ENCODE measurements at regions of chr3 and their contacts with region 1.

Region 1: DNA sequence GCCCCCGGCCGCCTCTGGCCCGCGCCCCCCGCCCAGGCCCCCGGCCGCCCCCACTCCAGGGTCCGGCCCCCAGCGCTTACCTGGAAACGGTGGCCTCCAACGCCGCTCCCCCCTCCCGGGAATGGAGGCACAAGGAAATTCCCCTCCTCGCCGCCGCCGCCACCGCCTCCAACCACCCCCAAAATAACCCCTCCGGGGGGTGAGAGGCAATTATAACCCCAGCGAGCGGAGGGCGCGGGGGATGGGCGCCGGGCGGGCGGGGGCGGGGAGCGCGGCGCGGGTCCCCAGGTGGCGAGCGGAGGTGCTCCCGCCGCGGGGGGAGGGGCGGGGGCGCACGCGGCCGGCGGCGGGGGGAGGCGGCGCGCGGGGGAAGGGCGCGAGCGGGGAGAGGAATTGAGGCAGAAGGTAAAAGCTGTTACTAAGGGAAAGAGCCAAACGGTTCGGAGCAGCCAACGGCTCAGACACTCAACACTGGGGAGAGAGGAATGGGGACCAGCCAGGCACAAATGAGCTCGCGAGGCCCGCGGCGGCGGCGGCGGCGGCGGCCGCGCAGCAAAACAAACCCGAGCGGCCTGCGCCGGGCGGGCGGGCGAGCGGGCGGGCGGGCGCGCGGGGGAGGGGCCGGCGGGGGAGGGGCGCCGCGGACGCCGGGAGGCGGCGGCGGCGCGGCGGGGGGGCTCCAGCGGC is at the start of gene TBL1XR1:
- DNase-seq: peak; percentile 88 to 95
- ATAC-seq: peak; percentile 52 to 84 (median 72)
- H3K4me3 ChIP-seq: peak within 1 kb of the TSS; percentile 85
- H3K4me3 Mint-ChIP-seq: peak within 1 kb of the TSS; percentile 94
- H3K27ac ChIP-seq: peak within 1 kb of the TSS; percentile 90
- H3K27ac Mint-ChIP-seq: peak within 1 kb of the TSS; percentile 93 to 97
- H3K4me1 ChIP-seq: peaks cover 21% of the 10 kb centered on the region
- H3K4me1 Mint-ChIP-seq: peaks cover 56 to 69% of the 10 kb centered on the region in 2 donors
- H3K27me3 ChIP-seq: no peaks in the 10 kb centered on the region
- H3K27me3 Mint-ChIP-seq: no peaks in the 10 kb centered on the region
- CTCF ChIP-seq: no peak
- total RNA-seq, gene TBL1XR1: 74.6 to 118 (median 81.7) TPM

Region 2: DNA sequence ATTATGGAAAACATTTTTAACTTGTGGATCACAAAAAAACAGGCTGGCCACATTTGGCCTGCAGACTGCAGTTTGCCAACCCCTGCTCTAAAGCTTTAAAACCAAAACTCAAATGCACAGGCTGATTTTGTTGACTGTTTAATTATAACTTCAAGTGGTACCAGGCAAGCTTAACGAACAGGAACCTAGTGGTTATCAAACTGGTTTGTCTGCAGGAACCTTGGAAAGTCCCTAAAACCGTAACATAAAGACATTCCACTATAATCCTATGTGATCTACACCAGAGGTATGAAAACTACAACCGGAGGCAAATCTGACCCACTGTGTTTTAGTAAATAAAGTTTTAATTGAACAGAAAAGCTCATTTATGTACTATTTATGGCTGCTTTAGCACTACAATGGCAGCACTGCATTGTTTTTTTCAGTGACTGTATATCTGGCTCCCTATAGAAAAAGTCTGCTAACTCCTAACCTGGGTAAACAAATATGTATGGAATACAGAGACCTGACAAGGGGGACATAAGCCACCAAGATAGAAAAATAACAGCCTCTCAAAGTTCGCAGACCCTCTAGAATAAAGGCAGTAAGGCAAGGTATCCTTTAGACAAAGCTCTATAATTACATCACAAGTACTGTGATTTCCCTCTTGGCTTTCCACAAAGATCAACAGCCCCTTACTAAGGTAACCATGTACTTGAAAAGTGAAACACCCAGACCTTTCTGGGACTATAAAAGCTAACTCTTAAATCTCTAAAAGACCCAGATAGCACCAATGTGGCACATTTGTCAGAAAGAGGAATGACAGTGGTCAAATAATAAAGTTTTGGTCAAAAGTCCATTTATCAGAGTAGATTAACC is 52.0 kb before region 1 on chr3:
- intact Hi-C with region 1: loop called (anchors 2 kb)
- DNase-seq: peak in 1 of 2 donors; percentile 80
- ATAC-seq: peak; percentile 87 to 88 (median 88)
- H3K4me3 ChIP-seq: no peak overlapping the region
- H3K4me3 Mint-ChIP-seq: peak overlapping the region; percentile 71
- H3K27ac ChIP-seq: peak overlapping the region; percentile 68
- H3K27ac Mint-ChIP-seq: peak overlapping the region; percentile 87 to 90
- H3K4me1 ChIP-seq: peaks cover 16% of the 10 kb centered on the region
- H3K4me1 Mint-ChIP-seq: peaks cover 56 to 59% of the 10 kb centered on the region in 2 donors
- H3K27me3 ChIP-seq: no peaks in the 10 kb centered on the region
- H3K27me3 Mint-ChIP-seq: no peaks in the 10 kb centered on the region
- CTCF ChIP-seq: no peak

Region 3: DNA sequence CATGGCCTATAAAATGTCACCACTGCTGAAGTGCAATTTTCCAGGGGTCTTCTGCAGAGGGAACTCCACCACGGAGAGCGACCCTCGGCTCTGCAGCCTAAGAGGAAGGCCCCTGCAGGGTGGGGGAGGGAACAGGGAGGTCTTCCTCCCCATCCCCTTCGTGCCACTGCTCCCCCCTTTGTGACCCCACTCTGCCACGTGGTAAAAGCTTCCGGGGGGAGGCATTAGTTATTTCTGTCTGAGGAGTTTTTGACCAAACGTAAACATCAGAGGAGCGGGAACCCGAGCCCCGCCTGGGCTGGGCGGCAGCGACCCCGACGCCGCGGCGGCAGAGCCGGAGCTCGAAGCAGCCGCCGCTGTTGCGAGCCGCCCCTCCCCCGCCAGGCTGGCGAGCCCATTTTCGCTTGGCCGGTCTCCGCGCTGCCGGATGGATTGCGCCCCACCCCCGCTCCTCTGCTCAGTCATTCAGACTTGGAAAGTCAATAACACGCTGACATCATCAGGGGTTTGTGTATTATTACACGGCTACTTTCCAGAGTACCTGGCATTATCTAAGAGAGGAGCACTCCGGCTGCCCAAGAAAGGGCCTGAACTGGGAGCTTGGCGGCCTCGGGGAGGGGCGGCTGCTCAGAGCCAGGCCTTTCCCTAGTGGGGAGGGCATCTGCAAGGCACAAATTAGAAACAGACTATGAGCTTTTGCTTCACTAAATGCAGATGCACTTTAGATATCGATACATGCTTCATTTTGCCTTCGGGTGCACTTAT is 162.6 kb after region 1 on chr3:
- intact Hi-C with region 1: loop called (anchors 1 kb)
- DNase-seq: peak; percentile 97
- ATAC-seq: peak; percentile 73 to 88 (median 74)
- H3K4me3 ChIP-seq: peak overlapping the region; percentile 60
- H3K4me3 Mint-ChIP-seq: peak overlapping the region; percentile 95
- H3K27ac ChIP-seq: peak overlapping the region; percentile 92
- H3K27ac Mint-ChIP-seq: peak overlapping the region; percentile 96 to 98
- H3K4me1 ChIP-seq: peaks cover 43% of the 10 kb centered on the region
- H3K4me1 Mint-ChIP-seq: peaks cover 43 to 63% of the 10 kb centered on the region in 2 donors
- H3K27me3 ChIP-seq: no peaks in the 10 kb centered on the region
- H3K27me3 Mint-ChIP-seq: no peaks in the 10 kb centered on the region
- CTCF ChIP-seq: no peak

Region 4: GRCh38 chr3:177603148-177603603 is 406.0 kb after region 1 on chr3:
- intact Hi-C with region 1: loop called (anchors 5 kb)
- DNase-seq: no peak
- ATAC-seq: peak; percentile 43 to 48 (median 44)
- H3K4me3 ChIP-seq: no peak overlapping the region
- H3K4me3 Mint-ChIP-seq: no peak overlapping the region
- H3K27ac ChIP-seq: no peak overlapping the region
- H3K27ac Mint-ChIP-seq: peak overlapping the region; percentile 48 to 64
- H3K4me1 ChIP-seq: peaks cover 15% of the 10 kb centered on the region
- H3K4me1 Mint-ChIP-seq: peaks cover 50 to 61% of the 10 kb centered on the region in 2 donors
- H3K27me3 ChIP-seq: no peaks in the 10 kb centered on the region
- H3K27me3 Mint-ChIP-seq: no peaks in the 10 kb centered on the region
- CTCF ChIP-seq: no peak

Region 5: GRCh38 chr3:177777699-177778098 is 580.5 kb after region 1 on chr3:
- intact Hi-C with region 1: loop called (anchors 10 kb)
- DNase-seq: peak in 1 of 2 donors; percentile 52
- ATAC-seq: peak; percentile 48 to 69 (median 57)
- H3K4me3 ChIP-seq: no peak overlapping the region
- H3K4me3 Mint-ChIP-seq: peak overlapping the region; percentile 70
- H3K27ac ChIP-seq: no peak overlapping the region
- H3K27ac Mint-ChIP-seq: peak overlapping the region; percentile 75 to 86
- H3K4me1 ChIP-seq: peaks cover 14% of the 10 kb centered on the region
- H3K4me1 Mint-ChIP-seq: peaks cover 31 to 32% of the 10 kb centered on the region in 2 donors
- H3K27me3 ChIP-seq: no peaks in the 10 kb centered on the region
- H3K27me3 Mint-ChIP-seq: no peaks in the 10 kb centered on the region
- CTCF ChIP-seq: peak; percentile 40

Measured in natural killer cell (primary cell).